Head of caudate nucleus (tissue), 42 donors: ENCODE measurements at regions of chr13 and their contacts with region 1.

Region 1: GRCh38 chr13:40682449-40683240 is 16.2 kb upstream of the FOXO1 start:
- DNase-seq: no peak

Region 2: DNA sequence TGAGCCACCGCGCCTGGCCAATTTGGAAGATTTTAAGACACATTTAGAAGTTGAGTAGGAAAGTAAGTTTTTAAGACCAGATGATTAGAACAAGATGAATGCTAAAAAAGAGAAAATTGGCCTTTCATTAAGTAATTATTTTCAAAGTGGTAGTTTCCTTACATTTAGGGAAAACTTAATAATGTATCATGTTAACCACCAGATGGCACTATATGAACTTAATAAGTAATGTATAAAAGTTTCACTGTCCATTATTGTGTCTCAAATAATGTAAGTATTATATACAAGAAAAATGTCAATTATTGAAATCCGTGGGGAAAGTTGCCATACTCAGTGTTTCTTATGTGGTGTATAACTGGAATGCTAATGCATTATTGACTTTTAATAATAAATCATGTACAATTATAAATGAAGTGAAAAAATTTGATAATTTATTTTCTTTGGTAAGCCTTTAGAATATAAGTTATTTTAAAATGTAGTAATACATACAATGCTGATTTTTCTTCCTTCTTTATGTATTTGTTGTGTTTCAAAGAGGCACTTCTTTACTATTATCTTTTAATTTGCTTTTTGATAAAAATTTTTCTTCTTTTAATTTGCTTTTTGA is 998.0 kb before region 1 on chr13:
- intact Hi-C with region 1: loop called (anchors 10 kb)
- DNase-seq: no peak

Region 3: DNA sequence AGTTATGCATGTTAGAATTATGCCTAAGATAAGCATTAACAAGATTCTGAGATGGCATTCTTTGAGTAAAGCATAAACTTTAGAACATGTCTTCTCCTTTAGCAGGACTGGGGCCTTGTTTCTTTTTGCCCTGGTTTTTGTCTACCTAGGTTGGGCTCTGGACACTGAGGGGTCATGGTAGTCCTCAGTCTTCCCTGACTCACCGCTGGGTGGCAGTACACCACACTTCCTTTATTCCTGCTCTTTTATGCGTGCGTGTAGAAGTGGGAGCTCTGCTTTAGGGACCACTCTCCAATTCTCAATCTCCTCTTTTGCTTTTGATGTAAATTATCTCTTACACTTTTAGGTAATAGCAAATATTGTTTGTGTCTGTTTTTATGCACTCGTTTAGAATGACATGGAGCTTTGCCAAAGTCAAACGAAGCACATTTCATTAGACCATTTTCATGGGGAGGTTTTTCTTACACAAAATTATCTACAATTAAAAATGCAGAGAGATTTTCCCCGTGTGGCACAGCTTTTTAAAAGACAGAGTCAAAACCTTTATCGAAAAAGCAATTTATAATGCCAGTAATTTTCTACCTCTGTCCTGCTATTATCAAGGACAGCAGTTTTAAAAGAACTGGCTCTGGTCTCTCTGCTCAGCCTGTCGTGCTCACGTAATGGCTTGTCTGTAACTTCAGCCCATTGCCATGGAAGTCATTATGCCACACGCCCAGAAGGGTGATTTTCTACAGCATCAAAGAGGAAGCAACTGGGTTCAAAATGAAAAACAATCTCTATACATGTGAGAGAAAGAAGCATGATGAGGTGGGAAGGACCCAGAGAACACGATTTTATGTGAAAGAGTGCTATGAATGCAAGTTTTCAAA is 613.2 kb before region 1 on chr13:
- intact Hi-C with region 1: loop called (anchors 10 kb)
- DNase-seq: peak; percentile 39 to 94 (median 84)

Region 4: GRCh38 chr13:40477623-40478608 is 204.7 kb before region 1 on chr13:
- intact Hi-C with region 1: no loop called
- DNase-seq: peak in 3 of 42 donors; percentile 26 to 56 (median 28)

Region 5: GRCh38 chr13:40558656-40559055 is 124.0 kb before region 1 on chr13:
- intact Hi-C with region 1: no loop called
- DNase-seq: no peak